ENCODE measurements at regions of chr16 and their contacts with region 1.

Region 1: GRCh38 chr16:83599789-83600462 is 207.9 kb upstream of the HSBP1 start:
- DNase-seq: no peak

Region 2: DNA sequence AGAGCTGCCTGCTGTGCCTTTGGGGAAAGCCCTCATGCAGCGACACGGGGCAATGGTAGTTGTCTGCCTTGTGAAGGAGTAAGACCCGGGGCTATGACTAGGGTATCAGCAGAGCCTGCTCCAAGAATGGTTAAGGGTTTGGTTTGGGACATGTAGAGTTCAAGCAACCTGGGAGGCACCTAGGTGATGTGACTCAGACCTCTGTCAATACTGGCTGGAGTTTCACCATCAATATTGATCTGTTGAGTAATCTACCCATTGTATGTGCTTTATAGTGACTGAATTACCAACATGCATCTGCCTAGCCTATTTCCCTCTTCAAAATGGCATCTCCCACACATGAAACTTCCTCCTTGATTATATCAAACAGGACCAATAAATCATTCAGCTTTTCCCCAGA is 190.6 kb before region 1 on chr16:
- intact Hi-C with region 1: no loop called
- DNase-seq: no peak

Region 3: DNA sequence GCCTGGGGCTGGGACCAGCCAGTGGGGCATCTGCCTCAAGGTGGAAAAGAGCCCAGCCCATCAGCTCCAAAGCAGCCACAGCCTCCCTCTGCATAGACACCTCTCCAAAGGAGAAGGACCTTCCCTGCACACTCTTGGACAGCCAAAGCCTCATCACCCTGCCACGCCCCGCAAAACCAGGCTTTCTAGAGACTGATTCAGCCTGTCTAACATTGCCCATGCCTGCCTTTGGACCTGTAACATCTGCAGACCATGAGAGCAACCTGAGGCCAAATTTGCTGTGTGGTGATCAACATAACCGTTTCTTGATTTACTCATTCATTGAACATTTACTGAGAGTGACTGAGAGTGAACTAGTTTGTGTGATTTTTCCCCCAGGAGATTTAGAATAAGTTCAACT is 11.9 kb before region 1 on chr16:
- intact Hi-C with region 1: loop called in 1 of 2 experiments (anchors 1 kb)
- DNase-seq: no peak

Region 4: DNA sequence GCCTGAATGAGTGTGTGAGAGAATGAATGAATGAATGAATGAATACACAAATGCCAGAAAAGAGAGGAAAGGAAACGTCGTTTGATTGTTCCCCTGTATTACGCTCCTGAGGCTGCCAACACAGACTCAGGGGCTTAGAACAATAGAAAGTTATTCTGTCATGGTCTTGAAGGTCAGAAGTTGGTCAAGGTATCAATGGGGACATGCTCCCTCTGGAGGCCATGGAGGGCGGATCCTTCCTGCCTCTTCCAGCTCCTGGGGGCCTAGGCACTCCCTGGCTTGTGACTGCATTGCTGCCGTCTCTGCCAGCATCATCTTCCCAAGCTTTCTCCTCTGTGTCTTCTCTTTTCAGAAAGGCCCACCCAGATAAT is 444.2 kb after region 1 on chr16:
- intact Hi-C with region 1: no loop called
- DNase-seq: peak; percentile 12